ENCODE measurements at regions of chr12 and their contacts with region 1.

Region 1: DNA sequence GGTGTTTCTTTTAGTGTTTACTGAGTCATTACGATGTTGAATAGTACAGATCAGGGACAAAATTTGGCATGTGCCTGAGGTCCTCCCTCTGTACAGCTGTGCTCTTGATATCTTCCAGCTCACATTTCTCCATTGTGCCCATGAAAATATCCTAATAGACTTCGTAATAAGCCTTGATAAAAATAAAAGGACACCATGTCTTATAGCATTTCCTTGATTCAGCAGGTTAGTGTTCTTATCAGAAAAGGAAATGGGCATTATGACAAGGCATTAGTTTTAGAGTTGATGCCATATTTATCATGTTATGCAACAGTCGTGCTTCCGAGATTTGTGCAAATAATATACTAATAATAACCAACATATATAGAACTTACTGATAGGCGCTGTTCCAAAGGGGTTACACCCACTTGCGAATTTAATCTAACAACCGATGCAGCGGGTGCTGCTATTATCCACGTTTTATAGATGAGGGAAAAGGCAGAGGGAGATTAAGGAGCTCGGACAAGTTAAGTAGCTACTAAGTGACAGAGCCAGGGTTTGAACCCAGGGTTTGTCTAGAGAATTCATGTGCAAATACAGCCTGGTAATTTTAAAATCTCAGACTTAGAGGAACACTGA is 15.1 kb upstream of the WNK1 start:
- DNase-seq: no peak
- ATAC-seq: no peak
- H3K4me3 Mint-ChIP-seq: no peak overlapping the region
- H3K27ac Mint-ChIP-seq: no peak overlapping the region
- H3K4me1 Mint-ChIP-seq: peaks cover 17% of the 10 kb centered on the region
- H3K27me3 Mint-ChIP-seq: no peaks in the 10 kb centered on the region
- CTCF ChIP-seq: no peak

Region 2: GRCh38 chr12:678747-679712 is 58.2 kb before region 1 on chr12:
- CTCF ChIA-PET with region 1: no interaction called
- POLR2A ChIA-PET with region 1: no interaction called
- intact Hi-C with region 1: no loop called
- DNase-seq: peak; percentile 53
- ATAC-seq: no peak
- H3K4me3 Mint-ChIP-seq: no peak overlapping the region
- H3K27ac Mint-ChIP-seq: peak overlapping the region; percentile 52
- H3K4me1 Mint-ChIP-seq: peaks cover 48% of the 10 kb centered on the region
- H3K27me3 Mint-ChIP-seq: no peaks in the 10 kb centered on the region
- CTCF ChIP-seq: no peak

Region 3: GRCh38 chr12:726281-727140 is 10.7 kb before region 1 on chr12:
- CTCF ChIA-PET with region 1: interaction called, 50 read pairs
- POLR2A ChIA-PET with region 1: interaction called, 6 read pairs
- intact Hi-C with region 1: no loop called
- DNase-seq: no peak
- ATAC-seq: peak; percentile 29
- H3K4me3 Mint-ChIP-seq: no peak overlapping the region
- H3K27ac Mint-ChIP-seq: peak overlapping the region; percentile 78
- H3K4me1 Mint-ChIP-seq: peaks cover 72% of the 10 kb centered on the region
- H3K27me3 Mint-ChIP-seq: no peaks in the 10 kb centered on the region
- CTCF ChIP-seq: no peak

Region 4: DNA sequence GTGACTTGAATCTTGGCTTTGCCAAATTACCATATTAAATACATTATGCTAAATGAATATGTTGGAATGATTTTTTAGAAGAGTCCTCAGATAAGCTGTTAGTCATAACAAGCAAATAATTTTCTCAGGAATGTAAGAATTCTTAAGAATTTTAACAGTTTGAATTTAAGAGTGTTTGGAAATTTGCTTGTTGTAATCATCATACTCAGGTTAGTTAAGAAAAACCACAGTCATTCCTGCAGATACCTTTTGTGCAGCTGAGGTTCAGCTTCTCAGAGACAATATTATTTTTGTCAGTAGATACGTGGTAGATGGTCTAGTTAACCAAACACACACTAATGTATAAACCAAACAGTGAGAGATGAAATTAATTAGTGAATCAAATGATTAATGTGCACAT is 24.0 kb after region 1 on chr12:
- CTCF ChIA-PET with region 1: no interaction called
- POLR2A ChIA-PET with region 1: no interaction called
- intact Hi-C with region 1: no loop called
- DNase-seq: no peak
- ATAC-seq: no peak
- H3K4me3 Mint-ChIP-seq: no peak overlapping the region
- H3K27ac Mint-ChIP-seq: no peak overlapping the region
- H3K4me1 Mint-ChIP-seq: peaks cover 68% of the 10 kb centered on the region
- H3K27me3 Mint-ChIP-seq: no peaks in the 10 kb centered on the region
- CTCF ChIP-seq: no peak